ENCODE measurements at regions of chr5 and their contacts with region 1.

Region 1: GRCh38 chr5:148998174-148998797 is 64.6 kb downstream of the SH3TC2 start:
- DNase-seq: peak; percentile 38
- ATAC-seq: peak; percentile 43; the same call in 2 of the 3 replicates
- H3K4me3 ChIP-seq: no peak overlapping the region
- H3K27ac ChIP-seq: no peak overlapping the region
- H3K4me1 ChIP-seq: peaks cover 16% of the 10 kb centered on the region
- H3K27me3 ChIP-seq: no peaks in the 10 kb centered on the region
- CTCF ChIP-seq: peak; percentile 47
- EP300 ChIP-seq: no peak
- POLR2A ChIP-seq: no peak
- RAD21 ChIP-seq: no peak

Region 2: DNA sequence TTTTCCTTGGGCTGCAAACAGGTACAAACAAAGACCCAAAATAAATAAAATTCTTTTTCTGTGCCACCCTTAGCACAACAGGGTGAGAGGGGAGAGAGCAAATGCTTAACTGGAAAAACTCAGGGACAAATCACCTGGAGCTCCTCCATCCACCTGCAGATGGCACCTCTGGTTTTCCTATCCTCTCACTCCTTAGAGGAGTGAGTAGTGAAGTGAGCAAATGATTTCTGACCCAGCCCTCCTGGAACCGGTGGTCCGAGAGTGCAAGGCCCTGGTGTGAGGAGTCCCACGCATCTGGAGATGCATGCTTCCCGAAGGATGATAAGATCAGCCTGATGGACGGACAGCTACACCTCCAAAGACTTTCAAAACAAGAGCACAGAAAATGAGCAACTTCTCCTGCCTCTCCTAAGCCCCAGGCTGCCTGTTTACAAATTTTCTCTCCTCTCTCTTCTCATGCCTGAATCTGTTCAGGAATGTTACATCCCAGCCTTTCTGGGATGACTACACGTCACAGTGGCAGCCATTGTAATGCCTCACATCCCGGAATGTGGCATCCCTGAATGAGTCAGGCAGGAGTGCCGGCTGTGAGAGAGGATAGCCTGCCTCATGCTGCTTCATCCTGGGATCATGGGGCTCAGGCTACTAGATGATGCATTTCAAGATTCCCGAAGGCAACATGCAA is 85.4 kb before region 1 on chr5:
- CTCF ChIA-PET with region 1: no interaction called
- POLR2A ChIA-PET with region 1: no interaction called
- in situ Hi-C with region 1: no loop called
- intact Hi-C with region 1: loop called (anchors 2 kb)
- DNase-seq: peak; percentile 16
- ATAC-seq: peak; percentile 79
- H3K4me3 ChIP-seq: no peak overlapping the region
- H3K27ac ChIP-seq: no peak overlapping the region
- H3K4me1 ChIP-seq: no peaks in the 10 kb centered on the region
- H3K27me3 ChIP-seq: no peaks in the 10 kb centered on the region
- CTCF ChIP-seq: peak; percentile 49
- EP300 ChIP-seq: no peak
- POLR2A ChIP-seq: no peak
- RAD21 ChIP-seq: no peak

Region 3: GRCh38 chr5:148966348-148966747 is 31.9 kb before region 1 on chr5:
- CTCF ChIA-PET with region 1: no interaction called
- POLR2A ChIA-PET with region 1: no interaction called
- in situ Hi-C with region 1: no loop called
- intact Hi-C with region 1: loop called (anchors 5 kb)
- DNase-seq: no peak
- ATAC-seq: no peak
- H3K4me3 ChIP-seq: no peak overlapping the region
- H3K27ac ChIP-seq: no peak overlapping the region
- H3K4me1 ChIP-seq: peaks cover 10% of the 10 kb centered on the region; the same call in 1 of the 2 replicates
- H3K27me3 ChIP-seq: no peaks in the 10 kb centered on the region
- CTCF ChIP-seq: no peak
- EP300 ChIP-seq: no peak
- POLR2A ChIP-seq: no peak
- RAD21 ChIP-seq: no peak

Region 4: DNA sequence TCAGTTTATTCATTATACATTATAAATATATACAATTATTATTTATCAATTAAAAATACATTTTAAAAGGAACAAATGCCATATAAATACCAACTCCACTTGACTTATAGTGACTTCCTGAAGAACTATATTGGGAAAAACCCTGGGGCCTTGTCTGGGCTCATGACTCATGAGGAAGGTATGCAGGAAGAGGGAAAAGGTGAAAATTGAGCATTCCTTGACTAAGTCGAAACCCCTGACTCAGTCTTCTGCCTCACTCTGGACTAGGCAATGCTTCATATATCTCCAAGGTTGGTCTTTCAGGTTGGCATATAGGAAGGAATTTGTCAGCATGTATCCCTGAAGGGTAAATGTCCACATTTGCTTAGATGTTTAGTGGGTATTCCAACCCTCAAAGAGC is 14.0 kb before region 1 on chr5:
- CTCF ChIA-PET with region 1: no interaction called
- POLR2A ChIA-PET with region 1: no interaction called
- in situ Hi-C with region 1: no loop called
- intact Hi-C with region 1: no loop called
- DNase-seq: no peak
- ATAC-seq: no peak
- H3K4me3 ChIP-seq: no peak overlapping the region
- H3K27ac ChIP-seq: no peak overlapping the region
- H3K4me1 ChIP-seq: no peaks in the 10 kb centered on the region
- H3K27me3 ChIP-seq: no peaks in the 10 kb centered on the region; a peak in 1 of 5 replicates
- CTCF ChIP-seq: no peak
- EP300 ChIP-seq: no peak
- POLR2A ChIP-seq: no peak
- RAD21 ChIP-seq: no peak

Region 5: DNA sequence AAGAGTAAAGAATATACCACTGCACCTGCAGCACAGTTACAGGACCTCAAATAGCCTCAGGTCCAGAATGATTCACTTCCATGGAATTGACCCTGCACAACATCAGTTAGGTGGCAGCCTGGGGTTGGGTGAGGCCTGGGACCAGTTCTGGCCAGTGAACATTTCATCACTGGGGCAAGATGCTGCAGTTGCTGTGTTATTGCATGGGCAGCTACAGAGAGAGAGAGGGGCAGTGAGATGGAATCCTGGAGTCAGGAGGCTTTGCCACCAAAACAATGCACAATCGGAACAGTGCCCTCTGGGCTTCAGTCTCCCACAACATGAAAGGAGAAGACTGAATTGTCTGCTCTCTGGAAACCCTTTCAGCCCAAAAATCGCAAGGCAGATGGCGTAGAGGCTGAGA is 12.8 kb after region 1 on chr5:
- CTCF ChIA-PET with region 1: no interaction called
- POLR2A ChIA-PET with region 1: no interaction called
- in situ Hi-C with region 1: no loop called
- intact Hi-C with region 1: no loop called
- DNase-seq: no peak
- ATAC-seq: no peak
- H3K4me3 ChIP-seq: no peak overlapping the region
- H3K27ac ChIP-seq: no peak overlapping the region
- H3K4me1 ChIP-seq: no peaks in the 10 kb centered on the region
- H3K27me3 ChIP-seq: no peaks in the 10 kb centered on the region
- CTCF ChIP-seq: no peak
- EP300 ChIP-seq: no peak
- POLR2A ChIP-seq: no peak
- RAD21 ChIP-seq: no peak